Activated CD4-positive, alpha-beta memory T cell treated with anti-CD3 and anti-CD28 coated beads for 36 hours (primary cell): ENCODE measurements at regions of chr9 and their contacts with region 1.

Region 1: DNA sequence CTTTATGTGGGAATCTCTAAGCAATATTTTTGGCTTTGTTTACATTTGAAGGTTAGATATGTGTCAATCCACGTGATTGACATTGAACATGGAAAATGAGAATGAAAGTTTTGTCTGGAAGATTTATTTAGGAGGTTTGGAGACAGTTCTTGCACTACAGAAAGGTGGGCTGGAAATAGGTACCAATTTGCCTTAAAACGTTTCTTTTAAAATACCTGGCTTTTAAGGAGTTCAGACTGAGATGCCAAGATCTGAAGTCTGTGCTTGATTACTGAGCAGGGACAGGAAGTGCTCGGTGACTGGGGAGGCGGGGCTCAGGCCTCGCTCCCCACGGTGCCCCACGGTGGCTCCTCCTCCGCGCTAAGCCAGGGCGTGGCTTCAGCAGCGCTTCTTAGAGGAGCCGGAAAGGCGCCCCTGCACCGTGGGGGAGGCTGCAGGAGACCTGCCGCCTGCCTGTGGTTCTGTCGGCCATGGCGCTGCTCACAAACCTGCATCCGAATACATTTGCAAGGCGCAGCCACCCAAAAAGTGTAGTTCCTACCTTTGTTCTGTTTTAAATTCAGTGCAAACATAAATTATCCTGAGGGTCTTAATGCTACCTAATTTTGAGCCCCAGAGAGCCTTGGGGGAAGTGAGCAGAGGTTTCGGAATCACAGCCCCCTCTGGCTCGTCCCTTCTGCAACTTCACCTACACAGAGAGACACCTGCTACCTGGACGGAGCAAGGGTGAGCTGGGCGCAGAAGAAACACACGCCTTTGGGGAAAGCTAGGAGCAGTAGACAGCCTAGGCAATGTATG is 49.2 kb downstream of the USP20 start:
- DNase-seq: peak; percentile 98
- H3K4me3 Mint-ChIP-seq: peak overlapping the region; percentile 93
- H3K27ac Mint-ChIP-seq: peak overlapping the region; percentile 97
- H3K4me1 Mint-ChIP-seq: peaks cover 41% of the 10 kb centered on the region
- H3K27me3 Mint-ChIP-seq: no peaks in the 10 kb centered on the region

Region 2: GRCh38 chr9:129282272-129283211 is 601.9 kb before region 1 on chr9:
- CTCF ChIA-PET with region 1: no interaction called
- POLR2A ChIA-PET with region 1: no interaction called
- intact Hi-C with region 1: no loop called
- DNase-seq: peak; percentile 1
- H3K4me3 Mint-ChIP-seq: no peak overlapping the region
- H3K27ac Mint-ChIP-seq: no peak overlapping the region
- H3K4me1 Mint-ChIP-seq: no peaks in the 10 kb centered on the region
- H3K27me3 Mint-ChIP-seq: no peaks in the 10 kb centered on the region

Region 3: DNA sequence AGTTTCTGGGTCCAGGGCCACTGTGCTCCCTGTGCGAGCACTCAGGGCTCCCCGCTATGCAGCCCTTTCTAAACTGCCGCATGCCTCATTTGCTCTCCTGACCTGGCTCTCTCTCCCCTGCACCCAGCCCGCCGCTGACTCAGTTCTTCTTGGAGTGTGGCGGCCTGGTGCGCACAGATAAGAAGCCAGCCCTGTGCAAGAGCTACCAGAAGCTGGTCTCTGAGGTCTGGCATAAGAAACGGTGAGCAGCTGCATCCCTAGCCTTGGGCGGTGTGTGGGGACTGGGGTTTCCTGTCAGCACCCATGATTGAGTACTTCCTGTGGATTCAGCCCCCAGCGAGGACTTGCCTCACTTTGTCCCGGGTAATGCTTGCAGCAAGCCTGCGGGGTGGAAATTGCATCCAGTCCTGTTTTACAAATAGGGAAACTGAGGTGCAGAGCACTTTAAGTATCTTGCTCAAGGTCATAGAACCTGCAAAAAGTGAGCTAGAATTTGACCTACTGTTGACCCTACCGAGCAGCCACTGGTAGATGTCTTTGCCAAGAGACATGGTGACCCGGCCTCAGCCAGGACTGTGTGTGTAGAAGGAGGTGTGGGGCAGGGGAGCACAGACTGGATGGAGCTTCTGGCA is 21.2 kb before region 1 on chr9:
- CTCF ChIA-PET with region 1: interaction called, 4 read pairs
- POLR2A ChIA-PET with region 1: interaction called, 23 read pairs
- intact Hi-C with region 1: loop called (anchors 1 kb)
- DNase-seq: peak; percentile 89
- H3K4me3 Mint-ChIP-seq: peak overlapping the region; percentile 52
- H3K27ac Mint-ChIP-seq: peak overlapping the region; percentile 84
- H3K4me1 Mint-ChIP-seq: peaks cover 70% of the 10 kb centered on the region
- H3K27me3 Mint-ChIP-seq: no peaks in the 10 kb centered on the region

Region 4: DNA sequence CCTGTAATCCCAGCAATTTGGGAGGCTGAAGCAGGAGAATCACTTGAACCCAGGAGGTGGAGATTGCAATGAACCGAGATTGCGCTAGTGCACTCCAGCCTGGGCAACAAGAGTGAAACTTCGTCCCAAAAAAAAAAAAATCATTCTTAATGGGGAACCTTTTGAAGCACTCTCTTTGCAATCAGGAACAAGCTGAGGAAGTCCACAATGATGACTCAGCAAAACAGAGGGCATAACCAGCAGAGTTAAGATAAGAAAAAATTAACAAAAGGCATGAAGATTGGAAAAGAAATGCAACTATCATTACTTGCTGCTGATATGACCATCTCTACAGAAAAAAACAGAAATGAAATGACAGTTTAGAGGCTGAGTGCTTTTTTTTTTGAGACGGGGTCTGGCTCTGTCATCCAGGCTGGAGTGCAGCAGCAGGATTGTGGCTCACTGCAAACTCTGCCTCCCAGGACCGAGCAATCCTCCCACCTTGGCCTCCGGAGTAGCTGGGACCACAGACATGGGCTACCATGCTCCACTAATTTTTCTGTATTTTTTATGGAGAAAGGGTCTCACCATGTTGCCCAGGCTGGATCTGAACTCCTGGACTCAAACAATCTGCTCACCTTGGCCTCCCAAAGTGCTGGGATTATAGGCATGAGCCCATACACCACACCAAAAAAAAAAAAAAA is 70.6 kb after region 1 on chr9:
- CTCF ChIA-PET with region 1: interaction called, 7 read pairs
- POLR2A ChIA-PET with region 1: interaction called, 15 read pairs
- intact Hi-C with region 1: loop called (anchors 2 kb)
- DNase-seq: no peak
- H3K4me3 Mint-ChIP-seq: no peak overlapping the region
- H3K27ac Mint-ChIP-seq: peak overlapping the region; percentile 54
- H3K4me1 Mint-ChIP-seq: peaks cover 51% of the 10 kb centered on the region
- H3K27me3 Mint-ChIP-seq: no peaks in the 10 kb centered on the region

Region 5: GRCh38 chr9:130029223-130029973 is 145.0 kb after region 1 on chr9:
- CTCF ChIA-PET with region 1: interaction called, 6 read pairs
- POLR2A ChIA-PET with region 1: interaction called, 20 read pairs
- intact Hi-C with region 1: loop called (anchors 1 kb)
- DNase-seq: peak; percentile 77
- H3K4me3 Mint-ChIP-seq: peak overlapping the region; percentile 33
- H3K27ac Mint-ChIP-seq: peak overlapping the region; percentile 92
- H3K4me1 Mint-ChIP-seq: peaks cover 94% of the 10 kb centered on the region
- H3K27me3 Mint-ChIP-seq: no peaks in the 10 kb centered on the region

Region 6: DNA sequence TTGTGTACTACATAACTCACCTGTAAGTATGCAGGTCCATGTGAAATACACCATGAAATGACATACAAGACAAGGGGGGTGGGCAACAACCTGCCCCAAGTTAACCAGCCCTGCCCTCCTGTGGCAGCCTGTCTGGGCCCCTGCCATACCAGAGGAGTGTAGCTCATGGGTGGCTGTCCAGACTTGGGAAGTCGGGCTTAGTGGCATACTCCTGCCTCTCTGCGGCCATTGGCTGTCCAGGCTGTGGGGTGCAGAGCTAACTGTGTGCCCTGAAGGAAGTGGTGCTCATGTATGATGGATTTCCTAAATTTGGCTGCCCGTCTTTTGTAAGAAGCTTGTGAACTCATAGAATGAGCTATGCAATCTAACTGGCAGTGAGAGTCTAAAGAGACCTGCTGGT is 216.3 kb after region 1 on chr9:
- CTCF ChIA-PET with region 1: interaction called, 23 read pairs
- POLR2A ChIA-PET with region 1: no interaction called
- intact Hi-C with region 1: loop called (anchors 1 kb)
- DNase-seq: no peak
- H3K4me3 Mint-ChIP-seq: no peak overlapping the region
- H3K27ac Mint-ChIP-seq: no peak overlapping the region
- H3K4me1 Mint-ChIP-seq: peaks cover 11% of the 10 kb centered on the region
- H3K27me3 Mint-ChIP-seq: no peaks in the 10 kb centered on the region

Region 7: GRCh38 chr9:130143958-130144366 is 259.5 kb after region 1 on chr9:
- CTCF ChIA-PET with region 1: no interaction called
- POLR2A ChIA-PET with region 1: no interaction called
- intact Hi-C with region 1: no loop called
- DNase-seq: no peak
- H3K4me3 Mint-ChIP-seq: no peak overlapping the region
- H3K27ac Mint-ChIP-seq: no peak overlapping the region
- H3K4me1 Mint-ChIP-seq: peaks cover 42% of the 10 kb centered on the region
- H3K27me3 Mint-ChIP-seq: peaks cover 31% of the 10 kb centered on the region

Region 8: DNA sequence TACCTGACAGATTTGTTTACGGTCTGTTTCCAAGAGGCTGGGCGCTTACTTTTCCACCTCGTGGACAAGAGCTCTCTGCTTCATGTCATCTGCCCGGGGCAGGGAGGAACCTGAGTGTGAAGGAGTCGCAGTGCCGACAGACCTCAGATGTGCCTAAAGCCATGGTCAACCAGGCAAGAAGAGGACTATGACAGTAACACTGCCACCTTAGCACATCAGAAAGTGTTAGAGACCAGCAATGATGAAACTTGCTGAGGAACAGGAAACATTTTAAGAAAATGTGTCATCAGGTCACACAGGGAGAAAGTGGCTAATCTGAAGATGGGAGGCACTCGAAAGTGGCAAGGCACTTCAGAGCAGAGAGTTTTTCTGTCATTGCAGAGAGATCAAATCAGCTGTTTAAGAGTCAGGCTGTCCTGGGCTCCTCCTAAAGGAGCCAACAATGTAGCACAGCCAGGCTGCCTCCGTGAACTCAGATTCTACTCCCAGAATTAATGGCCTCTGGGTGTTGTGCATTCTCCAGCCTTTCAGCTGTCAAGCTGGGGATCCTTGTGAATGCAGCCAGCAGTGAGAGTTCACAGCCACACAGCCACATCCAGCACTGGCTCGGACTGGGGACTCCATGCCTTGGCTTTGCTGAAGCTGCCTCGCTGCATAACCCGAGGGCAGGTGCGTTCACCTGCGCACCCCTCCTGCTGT is 1760.8 kb after region 1 on chr9:
- CTCF ChIA-PET with region 1: no interaction called
- POLR2A ChIA-PET with region 1: no interaction called
- intact Hi-C with region 1: loop called (anchors 5 kb)
- DNase-seq: peak; percentile 65
- H3K4me3 Mint-ChIP-seq: peak overlapping the region; percentile 43
- H3K27ac Mint-ChIP-seq: peak overlapping the region; percentile 94
- H3K4me1 Mint-ChIP-seq: peaks cover 68% of the 10 kb centered on the region
- H3K27me3 Mint-ChIP-seq: no peaks in the 10 kb centered on the region